ENCODE measurements at regions of chr20 and their contacts with region 1.

Region 1: GRCh38 chr20:44056010-44056698 is 130.8 kb downstream of the JPH2 start:
- DNase-seq: peak in 4 of 10 donors; percentile 50 to 60 (median 55)
- H3K4me3 ChIP-seq: no peak overlapping the region
- H3K27ac ChIP-seq: no peak overlapping the region
- H3K27me3 ChIP-seq: no peaks in the 10 kb centered on the region
- CTCF ChIP-seq: peak in 54 of 56 donors; percentile 19 to 77 (median 56)

Region 2: GRCh38 chr20:43975096-43975768 is 80.9 kb before region 1 on chr20:
- intact Hi-C with region 1: no loop called
- DNase-seq: no peak
- H3K4me3 ChIP-seq: no peak overlapping the region
- H3K27ac ChIP-seq: no peak overlapping the region
- H3K27me3 ChIP-seq: peaks cover 0 to 4% (median 0%) of the 10 kb centered on the region in 45 donors
- CTCF ChIP-seq: no peak

Region 3: DNA sequence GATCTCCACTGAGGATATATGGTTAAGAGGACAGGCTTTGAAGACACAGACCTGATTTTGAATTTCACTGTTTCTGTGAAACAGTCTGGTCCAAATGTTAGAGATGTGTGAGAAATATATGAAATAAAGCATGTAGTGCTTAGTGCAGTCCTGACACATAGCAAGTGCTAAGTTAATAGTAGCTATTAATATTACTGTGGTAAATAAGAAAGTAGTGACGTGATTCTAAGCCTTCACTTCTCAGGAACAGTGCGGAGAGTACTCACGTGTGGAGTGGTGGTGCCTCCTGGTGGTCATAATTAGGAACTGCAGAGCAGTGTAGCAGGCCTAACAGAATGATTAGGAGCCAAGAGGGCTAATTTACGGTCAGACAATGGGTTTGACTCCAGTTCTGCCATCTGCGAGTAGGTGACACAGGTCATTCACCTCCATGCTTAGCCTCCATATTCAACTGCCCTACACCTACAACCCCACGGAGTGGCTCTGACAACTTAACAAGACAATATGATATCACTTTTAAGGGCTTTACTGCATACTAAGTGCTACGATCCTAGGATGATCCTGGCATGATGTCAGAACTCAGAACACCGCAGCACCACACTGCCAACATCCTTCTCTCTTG is 24.6 kb after region 1 on chr20:
- intact Hi-C with region 1: loop called (anchors 1 to 2 kb)
- DNase-seq: peak in 9 of 10 donors; percentile 61 to 87 (median 76)
- H3K4me3 ChIP-seq: peak overlapping the region in 5 of 59 donors; percentile 14 to 20 (median 17)
- H3K27ac ChIP-seq: no peak overlapping the region
- H3K27me3 ChIP-seq: no peaks in the 10 kb centered on the region
- CTCF ChIP-seq: peak; percentile 95 to 100 (median 99)